ENCODE measurements at regions of chr1 and their contacts with region 1.

Region 1: GRCh38 chr1:193457681-193458080 is 271.3 kb upstream of the B3GALT2 start:
- DNase-seq: peak in 2 of 9 experiments; percentile 19 to 43
- ATAC-seq: peak; percentile 32
- H3K4me3 ChIP-seq: no peak overlapping the region
- H3K4me3 Mint-ChIP-seq: no peak overlapping the region
- H3K27ac ChIP-seq: no peak overlapping the region
- H3K27ac Mint-ChIP-seq: no peak overlapping the region
- H3K4me1 ChIP-seq: peaks cover 5% of the 10 kb centered on the region
- H3K4me1 Mint-ChIP-seq: peaks cover 24% of the 10 kb centered on the region
- H3K27me3 ChIP-seq: no peaks in the 10 kb centered on the region
- H3K27me3 Mint-ChIP-seq: no peaks in the 10 kb centered on the region
- CTCF ChIP-seq: no peak

Region 2: GRCh38 chr1:193069748-193070385 is 387.8 kb before region 1 on chr1:
- CTCF ChIA-PET with region 1: no interaction called
- POLR2A ChIA-PET with region 1: no interaction called
- intact Hi-C with region 1: no loop called
- DNase-seq: peak in 2 of 9 experiments; percentile 32 to 51
- ATAC-seq: peak; percentile 52
- H3K4me3 ChIP-seq: no peak overlapping the region
- H3K4me3 Mint-ChIP-seq: no peak overlapping the region
- H3K27ac ChIP-seq: peak overlapping the region in 1 of 2 experiments; percentile 74
- H3K27ac Mint-ChIP-seq: peak overlapping the region; percentile 73
- H3K4me1 ChIP-seq: peaks cover 15% of the 10 kb centered on the region
- H3K4me1 Mint-ChIP-seq: peaks cover 59% of the 10 kb centered on the region
- H3K27me3 ChIP-seq: no peaks in the 10 kb centered on the region
- H3K27me3 Mint-ChIP-seq: no peaks in the 10 kb centered on the region
- CTCF ChIP-seq: no peak

Region 3: GRCh38 chr1:193176113-193176512 is 281.6 kb before region 1 on chr1:
- CTCF ChIA-PET with region 1: no interaction called
- POLR2A ChIA-PET with region 1: no interaction called
- intact Hi-C with region 1: no loop called
- DNase-seq: no peak
- ATAC-seq: no peak
- H3K4me3 ChIP-seq: no peak overlapping the region
- H3K4me3 Mint-ChIP-seq: no peak overlapping the region
- H3K27ac ChIP-seq: no peak overlapping the region
- H3K27ac Mint-ChIP-seq: peak overlapping the region; percentile 29
- H3K4me1 ChIP-seq: no peaks in the 10 kb centered on the region
- H3K4me1 Mint-ChIP-seq: peaks cover 49% of the 10 kb centered on the region
- H3K27me3 ChIP-seq: no peaks in the 10 kb centered on the region
- H3K27me3 Mint-ChIP-seq: no peaks in the 10 kb centered on the region
- CTCF ChIP-seq: no peak

Region 4: DNA sequence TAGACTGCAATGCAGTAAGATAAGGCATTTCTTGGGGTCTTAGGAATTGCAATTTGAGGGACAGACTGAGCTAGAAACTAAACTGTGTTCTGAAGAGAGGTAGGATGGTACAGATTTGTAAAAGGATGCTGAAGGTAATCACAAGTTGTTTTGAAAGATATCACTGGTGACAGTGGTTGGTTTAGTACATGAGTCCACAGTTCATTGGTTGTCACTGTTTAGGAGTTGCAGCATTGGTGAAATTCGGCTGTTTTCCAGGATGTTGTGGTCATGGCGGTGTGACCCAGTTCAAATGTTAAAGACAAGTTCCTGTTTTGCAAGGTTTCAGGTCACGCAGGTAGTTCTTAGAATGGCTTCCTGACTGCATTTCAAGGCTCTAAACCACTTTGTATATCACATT is 21.5 kb after region 1 on chr1:
- CTCF ChIA-PET with region 1: no interaction called
- POLR2A ChIA-PET with region 1: interaction called, 10 read pairs
- intact Hi-C with region 1: loop called in 1 of 2 experiments (anchors 2 kb)
- DNase-seq: peak; percentile 46 to 92 (median 74)
- ATAC-seq: peak; percentile 95
- H3K4me3 ChIP-seq: no peak overlapping the region
- H3K4me3 Mint-ChIP-seq: peak overlapping the region; percentile 27
- H3K27ac ChIP-seq: peak overlapping the region; percentile 56 to 75
- H3K27ac Mint-ChIP-seq: peak overlapping the region; percentile 93
- H3K4me1 ChIP-seq: peaks cover 31% of the 10 kb centered on the region
- H3K4me1 Mint-ChIP-seq: peaks cover 48% of the 10 kb centered on the region
- H3K27me3 ChIP-seq: no peaks in the 10 kb centered on the region
- H3K27me3 Mint-ChIP-seq: no peaks in the 10 kb centered on the region
- CTCF ChIP-seq: no peak

Region 5: GRCh38 chr1:193519922-193520321 is 62.2 kb after region 1 on chr1:
- CTCF ChIA-PET with region 1: no interaction called
- POLR2A ChIA-PET with region 1: no interaction called
- intact Hi-C with region 1: no loop called
- DNase-seq: no peak
- ATAC-seq: no peak
- H3K4me3 ChIP-seq: no peak overlapping the region
- H3K4me3 Mint-ChIP-seq: no peak overlapping the region
- H3K27ac ChIP-seq: no peak overlapping the region
- H3K27ac Mint-ChIP-seq: no peak overlapping the region
- H3K4me1 ChIP-seq: no peaks in the 10 kb centered on the region
- H3K4me1 Mint-ChIP-seq: no peaks in the 10 kb centered on the region
- H3K27me3 ChIP-seq: no peaks in the 10 kb centered on the region
- H3K27me3 Mint-ChIP-seq: no peaks in the 10 kb centered on the region
- CTCF ChIP-seq: no peak

Measured in CD8-positive, alpha-beta T cell (primary cell).